Left cardiac atrium (tissue), 4 donors: ENCODE measurements at regions of chr5 and their contacts with region 1.

Region 1: GRCh38 chr5:11182441-11183268 is 421.6 kb upstream of the DAP start:
- DNase-seq: no peak
- ATAC-seq: peak in 1 of 2 donors; percentile 58

Region 2: GRCh38 chr5:10856683-10857337 is 325.8 kb before region 1 on chr5:
- intact Hi-C with region 1: loop called (anchors 10 kb)
- DNase-seq: peak; percentile 57
- ATAC-seq: peak; percentile 42 to 55

Region 3: GRCh38 chr5:10863763-10864383 is 318.8 kb before region 1 on chr5:
- intact Hi-C with region 1: loop called (anchors 10 kb)
- DNase-seq: peak; percentile 53
- ATAC-seq: peak; percentile 61 to 73

Region 4: DNA sequence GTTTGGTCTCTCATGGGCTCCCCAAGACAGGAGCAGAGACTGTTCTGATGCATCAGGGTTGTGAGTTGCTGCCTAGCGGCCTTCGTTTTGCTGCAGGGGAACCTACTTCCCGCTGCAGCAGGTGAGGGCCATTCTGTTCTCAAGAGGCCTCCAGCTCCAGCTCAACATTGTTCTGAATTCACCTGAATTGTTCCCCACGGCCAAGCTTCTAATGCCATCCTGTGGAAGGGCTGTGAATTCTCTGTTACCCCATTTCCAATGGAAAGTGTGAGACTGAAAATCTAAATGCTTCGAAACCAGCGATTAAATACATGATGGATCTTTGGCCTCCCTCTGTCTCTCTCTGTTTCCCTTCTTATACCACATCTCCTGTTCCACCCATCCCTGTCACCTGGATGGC is 72.5 kb before region 1 on chr5:
- intact Hi-C with region 1: no loop called
- DNase-seq: no peak
- ATAC-seq: no peak

Region 5: GRCh38 chr5:11261226-11261625 is 78.6 kb after region 1 on chr5:
- intact Hi-C with region 1: no loop called
- DNase-seq: no peak
- ATAC-seq: no peak